Activated naive CD4-positive, alpha-beta T cell treated with anti-CD3 and anti-CD28 coated beads for 36 hours (primary cell): ENCODE measurements at regions of chr5 and their contacts with region 1.

Region 1: DNA sequence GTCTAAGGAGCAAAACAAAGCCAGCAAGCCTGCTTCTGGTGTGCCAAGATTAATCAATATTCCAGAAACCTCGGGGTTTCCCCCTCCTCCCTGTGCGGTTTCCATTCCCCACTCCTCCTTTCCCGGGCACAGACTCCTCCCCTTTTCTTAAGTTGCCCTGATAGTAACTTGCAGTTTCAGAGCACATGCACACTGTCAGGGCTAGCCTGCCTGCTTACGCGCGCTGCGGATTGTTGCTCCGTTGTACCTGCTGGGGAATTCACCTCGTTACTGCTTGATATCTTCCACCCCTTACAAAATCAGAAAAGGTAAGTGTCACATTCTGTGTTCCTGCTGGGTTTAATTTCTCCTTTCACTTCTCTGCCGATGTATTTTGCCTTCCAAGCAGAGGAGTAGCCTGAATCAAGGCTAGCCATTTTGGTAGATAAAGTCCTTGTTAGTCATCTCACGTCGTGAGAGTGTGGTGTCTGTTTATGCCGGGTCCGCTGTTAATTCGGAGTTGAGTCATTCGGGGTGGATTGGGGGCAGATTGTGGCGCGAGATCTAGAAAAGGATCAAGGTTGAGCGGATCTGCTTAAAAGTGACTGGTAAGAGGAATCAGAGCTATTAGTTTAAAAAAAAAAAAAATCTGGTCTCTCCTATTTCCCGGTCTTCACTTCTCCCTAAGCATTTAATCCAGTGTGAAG is at the start of gene SLC1A3:
- DNase-seq: peak; percentile 80
- H3K4me3 Mint-ChIP-seq: peak within 1 kb of the TSS; percentile 71
- H3K27ac Mint-ChIP-seq: peak within 1 kb of the TSS; percentile 67
- H3K4me1 Mint-ChIP-seq: peaks cover 19% of the 10 kb centered on the region
- H3K27me3 Mint-ChIP-seq: peaks cover 47% of the 10 kb centered on the region
- total RNA-seq, gene SLC1A3: 0.86 to 0.99 TPM

Region 2: DNA sequence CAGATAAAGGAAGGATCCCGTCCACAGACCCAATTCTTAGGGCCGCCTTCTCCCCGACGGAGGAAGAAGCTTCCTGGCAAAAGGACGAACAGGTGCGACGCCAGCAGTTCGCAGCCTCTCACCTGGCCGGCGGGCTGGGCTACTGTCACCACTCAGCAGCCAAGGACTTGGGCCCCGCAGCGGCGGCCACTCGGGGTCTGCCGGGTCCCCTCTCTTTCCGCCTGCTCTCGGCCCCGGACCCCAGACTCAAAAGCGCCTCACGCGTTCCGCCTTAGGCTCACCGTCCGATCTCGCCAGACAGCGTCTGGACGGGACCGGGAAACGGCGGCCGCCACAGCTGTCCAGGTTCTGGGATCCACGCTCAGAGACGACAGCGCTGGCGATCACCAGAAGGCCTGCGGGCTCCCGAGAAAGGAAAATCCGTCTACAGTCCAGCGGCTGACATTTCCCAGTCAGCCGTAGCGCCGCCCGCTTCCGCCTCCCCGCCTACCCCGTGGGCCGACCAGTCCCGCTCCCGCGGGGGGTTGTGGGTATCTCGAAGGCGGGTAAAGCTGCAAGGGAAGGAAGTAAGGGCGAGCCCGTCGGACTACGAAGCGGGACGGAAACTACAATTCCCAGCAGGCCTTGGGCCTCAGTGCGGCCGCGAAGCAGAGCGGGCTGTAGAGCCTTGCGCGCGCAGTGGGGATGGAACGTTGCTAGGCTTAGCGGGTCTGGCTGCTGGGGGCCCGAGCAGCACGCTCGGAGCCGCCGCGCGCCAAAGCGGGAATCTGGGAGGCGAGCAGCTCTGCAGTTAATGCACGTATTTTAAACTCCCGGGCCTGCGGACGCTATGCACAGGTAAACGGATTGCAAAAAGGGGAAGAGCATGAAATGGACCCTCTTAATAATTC is 454.9 kb before region 1 on chr5 and contains the starts of genes LMBRD2 and SKP2:
- CTCF ChIA-PET with region 1: no interaction called
- intact Hi-C with region 1: loop called (anchors 1 kb)
- DNase-seq: peak; percentile 98
- H3K4me3 Mint-ChIP-seq: peak within 1 kb of the TSS; percentile 96
- H3K27ac Mint-ChIP-seq: peak within 1 kb of the TSS; percentile 76
- H3K4me1 Mint-ChIP-seq: peaks cover 67% of the 10 kb centered on the region
- H3K27me3 Mint-ChIP-seq: no peaks in the 10 kb centered on the region
- total RNA-seq, gene LMBRD2: 7.6 to 8.0 TPM
- total RNA-seq, gene SKP2: 44.4 to 48.1 TPM

Region 3: DNA sequence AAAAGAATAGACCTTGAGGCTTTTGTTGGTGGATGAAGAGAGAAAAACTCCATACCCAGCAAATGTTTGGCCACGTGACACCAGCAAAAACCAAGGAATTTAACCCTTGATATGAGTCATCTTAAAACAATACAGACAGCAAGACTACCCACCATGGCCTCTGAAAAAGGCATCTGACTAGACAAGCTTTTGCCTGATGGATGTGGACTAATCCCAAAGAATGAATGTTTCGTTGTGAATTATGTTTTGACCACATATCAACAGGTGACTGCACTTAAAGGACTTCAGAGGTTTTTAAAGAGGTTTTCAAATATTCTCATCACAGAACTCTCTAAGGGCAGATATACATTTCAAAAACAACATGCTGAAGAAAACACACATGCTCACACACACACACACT is 33.1 kb before region 1 on chr5:
- CTCF ChIA-PET with region 1: no interaction called
- intact Hi-C with region 1: no loop called
- DNase-seq: no peak
- H3K4me3 Mint-ChIP-seq: no peak overlapping the region
- H3K27ac Mint-ChIP-seq: no peak overlapping the region
- H3K4me1 Mint-ChIP-seq: no peaks in the 10 kb centered on the region
- H3K27me3 Mint-ChIP-seq: no peaks in the 10 kb centered on the region

Region 4: GRCh38 chr5:36630201-36631145 is 23.9 kb after region 1 on chr5:
- CTCF ChIA-PET with region 1: no interaction called
- intact Hi-C with region 1: loop called (anchors 1 kb)
- DNase-seq: no peak
- H3K4me3 Mint-ChIP-seq: no peak overlapping the region
- H3K27ac Mint-ChIP-seq: no peak overlapping the region
- H3K4me1 Mint-ChIP-seq: peaks cover 3% of the 10 kb centered on the region
- H3K27me3 Mint-ChIP-seq: peaks cover 30% of the 10 kb centered on the region

Region 5: DNA sequence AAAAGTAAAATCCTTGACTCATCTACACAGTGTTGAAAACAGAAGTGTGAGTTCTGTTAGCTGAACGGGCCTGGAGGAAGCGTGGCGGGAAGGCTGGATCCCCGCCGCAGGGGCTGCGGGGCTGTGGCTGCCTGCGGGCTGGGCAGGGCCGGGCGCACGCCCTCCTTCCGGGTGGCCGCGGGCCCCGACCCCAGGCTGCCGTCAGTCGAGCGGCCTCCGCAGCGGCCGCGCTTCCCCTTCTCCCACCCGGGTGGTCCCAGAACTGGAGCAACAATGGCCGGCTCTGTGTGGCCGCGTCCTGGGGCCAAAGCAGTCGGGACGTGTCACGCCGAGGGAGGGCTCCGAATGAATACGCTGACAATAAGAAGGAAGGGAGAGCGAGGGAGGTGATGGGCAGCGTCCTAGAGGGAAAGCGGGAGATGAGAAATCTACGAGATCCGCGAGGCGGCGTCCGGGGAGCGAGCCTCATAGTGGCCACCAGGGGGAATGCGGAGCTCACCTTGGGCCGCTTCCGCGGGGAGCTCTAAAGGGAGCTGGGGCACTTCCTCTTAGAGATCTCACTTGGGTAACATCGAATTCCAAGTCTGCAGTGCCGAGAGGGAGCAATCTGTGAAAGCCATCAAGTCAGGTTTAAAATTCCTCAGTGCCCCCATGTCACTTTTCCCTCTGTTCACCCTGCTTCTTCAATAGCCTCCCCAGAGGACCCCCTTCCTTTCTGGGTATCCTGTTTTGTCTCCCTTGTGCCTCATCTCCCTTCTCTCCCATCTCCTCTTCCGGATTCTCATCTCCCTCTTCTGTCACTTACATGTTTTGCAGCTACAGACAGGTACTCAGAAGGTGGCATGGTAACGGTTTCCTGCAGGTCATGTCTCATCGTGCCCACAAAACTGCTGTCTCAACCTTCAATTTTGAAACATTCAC is 83.7 kb after region 1 on chr5:
- CTCF ChIA-PET with region 1: interaction called, 4 read pairs
- intact Hi-C with region 1: loop called (anchors 1 kb)
- DNase-seq: peak; percentile 79
- H3K4me3 Mint-ChIP-seq: peak overlapping the region; percentile 81
- H3K27ac Mint-ChIP-seq: no peak overlapping the region
- H3K4me1 Mint-ChIP-seq: peaks cover 12% of the 10 kb centered on the region
- H3K27me3 Mint-ChIP-seq: peaks cover 37% of the 10 kb centered on the region

Region 6: DNA sequence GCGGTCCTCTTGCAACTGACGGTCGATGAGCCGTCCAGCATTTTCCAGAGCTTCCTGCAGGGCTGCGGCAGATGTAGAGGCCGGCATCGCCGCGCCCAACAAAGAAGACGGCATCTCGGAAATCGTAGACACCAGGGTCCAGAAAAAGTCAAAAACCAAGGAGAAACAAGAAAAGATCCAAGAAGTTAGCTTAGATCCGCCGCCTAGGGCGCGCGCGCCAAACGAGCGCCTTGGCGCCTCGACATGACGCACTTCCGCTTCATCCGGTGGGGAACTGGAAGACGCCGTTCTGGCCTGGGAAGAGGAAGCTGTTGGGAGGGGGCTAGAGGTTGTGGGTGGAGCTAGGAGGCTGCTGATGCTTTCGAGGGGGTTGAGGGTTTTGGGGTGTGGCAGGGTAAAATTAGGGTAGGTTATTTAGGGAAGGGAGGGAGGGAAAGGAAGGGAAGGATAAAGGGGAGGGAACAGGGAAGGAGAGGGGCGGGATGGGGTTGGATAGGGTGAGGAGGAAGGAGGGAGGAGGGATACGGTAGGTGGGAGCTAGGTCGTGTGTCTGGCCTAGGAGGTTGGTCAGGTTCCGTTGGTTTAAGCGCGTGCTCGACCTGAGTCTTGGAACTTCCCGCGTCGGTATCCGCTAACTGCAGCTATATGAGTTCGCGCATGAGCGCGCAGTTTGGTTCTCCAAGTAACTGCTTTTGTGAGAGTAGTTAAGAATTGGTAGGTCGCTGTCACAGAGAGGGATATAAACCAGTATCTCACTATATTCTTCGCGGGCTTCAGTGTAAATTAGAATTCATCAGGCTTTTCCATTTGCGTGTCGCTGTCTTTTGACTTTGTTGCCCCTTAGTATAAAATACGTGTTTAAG is 764.5 kb after region 1 on chr5 and contains the start of gene NUP155:
- CTCF ChIA-PET with region 1: no interaction called
- intact Hi-C with region 1: loop called (anchors 1 kb)
- DNase-seq: peak; percentile 94
- H3K4me3 Mint-ChIP-seq: peak within 1 kb of the TSS; percentile 99
- H3K27ac Mint-ChIP-seq: peak within 1 kb of the TSS; percentile 96
- H3K4me1 Mint-ChIP-seq: peaks cover 37% of the 10 kb centered on the region
- H3K27me3 Mint-ChIP-seq: no peaks in the 10 kb centered on the region
- total RNA-seq, gene NUP155: 79.2 to 87.8 TPM